ENCODE measurements at regions of chr10 and their contacts with region 1.

Region 1: DNA sequence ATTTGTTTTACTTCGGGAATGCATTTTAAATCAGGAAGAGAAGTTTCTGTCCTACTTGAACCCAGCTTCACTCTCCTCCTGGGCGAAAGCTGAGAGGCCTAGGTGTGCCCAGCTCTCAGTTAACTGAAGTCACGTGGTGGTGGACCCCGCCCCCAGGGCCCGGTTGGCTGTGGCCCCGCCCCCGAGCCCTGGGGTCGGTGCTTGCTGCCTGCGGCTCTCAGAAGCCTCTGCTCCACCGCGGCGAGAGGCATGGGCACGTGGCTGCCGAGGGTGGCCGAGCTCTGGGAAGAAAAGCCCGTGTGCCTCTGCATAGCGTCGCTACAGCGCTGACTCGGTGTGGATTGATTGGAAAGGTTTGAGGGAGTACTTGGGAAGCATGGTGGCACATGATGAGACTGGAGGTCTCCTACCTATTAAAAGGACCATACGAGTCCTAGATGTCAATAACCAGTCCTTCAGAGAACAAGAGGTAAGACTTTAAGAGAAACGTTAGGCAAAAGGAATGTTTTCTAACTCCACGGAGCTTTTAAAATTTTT is 34.1 kb downstream of the NET1 start:
- DNase-seq: peak; percentile 99
- H3K4me3 ChIP-seq: peak overlapping the region; percentile 40
- H3K27ac ChIP-seq: peak overlapping the region; percentile 79
- H3K4me1 ChIP-seq: peaks cover 3% of the 10 kb centered on the region
- H3K27me3 ChIP-seq: no peaks in the 10 kb centered on the region
- CTCF ChIP-seq: no peak

Region 2: DNA sequence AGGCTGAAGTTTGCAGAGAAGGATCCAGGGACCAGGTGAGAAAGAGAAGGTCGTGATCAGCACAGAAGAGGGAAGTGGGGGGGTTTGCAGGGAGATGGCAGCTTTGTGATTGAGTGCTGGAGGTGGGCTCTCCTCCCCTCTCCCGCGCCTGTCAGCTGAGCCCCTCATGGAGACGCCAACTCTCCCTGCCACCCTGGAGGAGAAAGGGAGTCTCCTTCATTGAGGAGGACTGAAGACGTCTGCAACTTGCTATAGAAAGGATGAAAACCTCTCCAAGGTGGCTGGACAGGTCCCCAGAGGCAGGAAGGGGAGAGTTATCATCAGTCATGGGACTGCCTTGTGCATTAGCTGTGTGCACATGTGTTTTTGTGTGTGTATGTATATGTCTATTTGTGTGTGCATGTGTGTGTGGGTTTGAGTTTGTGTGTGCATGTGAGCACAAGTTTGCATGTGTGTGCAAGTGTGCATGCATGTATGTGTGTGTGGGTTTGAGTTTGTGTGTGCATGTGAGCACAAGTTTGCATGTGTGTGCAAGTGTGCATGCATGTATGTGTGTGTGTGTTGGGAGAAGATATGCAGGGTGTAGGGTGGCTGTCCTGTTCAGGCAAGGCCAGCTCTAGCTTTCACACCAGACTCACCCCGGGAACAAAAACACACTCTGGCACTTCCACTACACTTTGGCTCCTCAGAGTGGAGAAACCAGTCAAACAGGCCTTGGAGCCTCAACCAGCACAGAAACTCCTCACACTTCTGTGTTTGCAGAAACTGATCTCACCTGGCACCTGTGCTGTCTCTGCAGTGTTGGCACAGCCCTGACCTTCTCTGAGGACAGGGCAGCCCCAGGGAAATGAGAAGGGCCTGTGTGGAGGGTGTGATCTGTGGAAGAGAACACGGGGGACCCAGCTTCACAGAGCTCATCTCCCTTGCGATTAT is 56.7 kb after region 1 on chr10:
- intact Hi-C with region 1: no loop called
- DNase-seq: peak; percentile 87
- H3K4me3 ChIP-seq: no peak overlapping the region
- H3K27ac ChIP-seq: no peak overlapping the region
- H3K4me1 ChIP-seq: no peaks in the 10 kb centered on the region
- H3K27me3 ChIP-seq: no peaks in the 10 kb centered on the region
- CTCF ChIP-seq: no peak

Region 3: GRCh38 chr10:5548527-5549223 is 102.2 kb after region 1 on chr10:
- intact Hi-C with region 1: loop called (anchors 5 kb)
- DNase-seq: peak; percentile 88
- H3K4me3 ChIP-seq: no peak overlapping the region
- H3K27ac ChIP-seq: peak overlapping the region; percentile 93
- H3K4me1 ChIP-seq: peaks cover 36% of the 10 kb centered on the region
- H3K27me3 ChIP-seq: no peaks in the 10 kb centered on the region
- CTCF ChIP-seq: no peak